Activated naive CD4-positive, alpha-beta T cell treated with anti-CD3 and anti-CD28 coated beads for 36 hours (primary cell): ENCODE measurements at regions of chr1 and their contacts with region 1.

Region 1: DNA sequence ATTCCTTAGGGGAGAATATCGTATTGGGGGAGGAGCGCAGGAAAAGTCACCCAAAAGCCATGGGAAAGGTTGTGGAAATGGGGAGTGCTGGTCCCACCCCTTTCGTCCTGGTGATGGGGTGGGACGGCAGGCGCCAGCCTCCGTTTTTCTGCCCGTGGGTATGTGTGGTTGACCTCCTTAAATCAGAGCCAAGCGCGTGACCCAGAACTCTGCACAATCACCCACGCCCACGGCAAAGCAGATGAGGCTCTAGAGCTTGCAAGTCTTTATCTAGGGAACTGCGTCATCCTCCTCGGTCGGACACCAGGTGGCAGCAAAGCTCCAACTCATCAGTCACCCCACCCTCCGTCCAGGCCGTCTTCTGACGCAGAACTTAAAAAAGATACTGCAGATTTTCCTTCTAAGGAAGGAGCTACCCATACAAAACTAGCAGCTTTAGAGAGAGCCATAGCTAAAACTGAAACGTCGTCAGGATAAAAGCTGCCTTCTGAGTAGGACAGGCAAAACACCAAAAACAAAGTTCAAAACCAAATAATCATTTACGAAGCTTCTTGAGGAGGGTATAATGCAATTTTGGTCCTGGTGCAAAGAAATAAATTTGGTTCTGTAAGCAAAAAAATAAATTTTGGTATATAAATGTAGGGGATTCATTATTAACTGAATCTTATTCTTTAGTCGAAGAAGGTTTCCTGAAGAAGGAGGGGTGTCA is 62.0 kb downstream of the TBX19 start:
- DNase-seq: peak; percentile 92
- H3K4me3 Mint-ChIP-seq: no peak overlapping the region
- H3K27ac Mint-ChIP-seq: no peak overlapping the region
- H3K4me1 Mint-ChIP-seq: peaks cover 19% of the 10 kb centered on the region
- H3K27me3 Mint-ChIP-seq: no peaks in the 10 kb centered on the region

Region 2: DNA sequence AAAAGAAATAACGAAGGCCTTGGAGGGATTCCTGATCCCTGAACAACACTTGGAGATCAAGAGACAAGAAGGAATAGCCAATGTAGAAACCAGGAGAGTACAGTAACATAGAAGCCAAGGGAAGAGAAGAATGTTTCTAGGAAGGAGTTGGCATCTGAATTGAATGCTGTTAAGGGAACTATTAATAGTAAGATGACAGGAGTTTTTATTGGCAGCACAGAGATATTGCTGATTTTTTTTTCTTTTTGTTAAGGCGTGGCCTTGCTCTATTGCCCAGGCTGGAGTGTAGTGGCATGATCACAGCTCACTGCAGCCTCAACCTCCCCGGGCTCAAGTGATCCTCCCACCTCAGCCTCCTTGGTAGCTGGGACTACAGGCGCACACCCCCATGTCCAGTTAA is 126.6 kb before region 1 on chr1:
- CTCF ChIA-PET with region 1: no interaction called
- intact Hi-C with region 1: no loop called
- DNase-seq: no peak
- H3K4me3 Mint-ChIP-seq: no peak overlapping the region
- H3K27ac Mint-ChIP-seq: no peak overlapping the region
- H3K4me1 Mint-ChIP-seq: peaks cover 6% of the 10 kb centered on the region
- H3K27me3 Mint-ChIP-seq: no peaks in the 10 kb centered on the region

Region 3: DNA sequence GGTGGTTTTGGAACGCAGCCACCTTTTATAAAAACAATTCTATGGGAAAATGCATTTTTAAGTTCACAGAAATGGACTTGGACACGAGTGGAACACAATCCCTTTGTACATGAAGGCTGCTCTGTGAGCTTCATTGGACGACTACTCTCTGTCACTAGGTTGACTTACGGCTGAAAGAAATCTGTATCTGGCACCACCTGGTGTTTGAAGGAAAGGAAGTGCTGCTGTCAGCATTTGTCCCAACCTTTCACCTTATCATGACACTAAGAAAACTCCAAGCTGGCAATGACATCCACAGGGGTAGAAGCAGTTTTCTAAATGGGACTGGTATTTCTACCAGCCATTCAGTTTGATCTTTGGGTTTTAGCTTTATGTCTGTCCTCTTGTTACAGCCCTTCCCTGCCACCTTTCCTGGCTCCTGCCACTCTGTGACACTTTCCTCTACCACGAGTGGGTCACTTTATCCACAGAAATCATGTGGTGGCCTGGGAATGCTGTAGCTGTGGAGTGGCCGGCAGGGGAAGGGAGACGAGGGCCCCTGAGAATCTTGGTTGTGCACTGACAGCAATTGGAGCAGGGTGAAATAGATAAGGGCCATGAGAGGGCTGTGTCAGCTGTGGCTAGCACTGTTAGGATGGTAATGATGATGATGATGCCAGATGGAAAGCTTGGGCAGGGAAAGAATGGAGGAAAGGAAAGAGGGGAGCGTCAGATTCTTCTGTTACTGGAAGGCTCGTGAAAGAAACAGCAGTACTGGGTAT is 23.2 kb after region 1 on chr1:
- CTCF ChIA-PET with region 1: interaction called, 70 read pairs
- intact Hi-C with region 1: loop called (anchors 1 kb)
- DNase-seq: peak; percentile 22
- H3K4me3 Mint-ChIP-seq: no peak overlapping the region
- H3K27ac Mint-ChIP-seq: no peak overlapping the region
- H3K4me1 Mint-ChIP-seq: peaks cover 9% of the 10 kb centered on the region
- H3K27me3 Mint-ChIP-seq: peaks cover 3% of the 10 kb centered on the region

Region 4: GRCh38 chr1:168421399-168422004 is 78.8 kb after region 1 on chr1:
- CTCF ChIA-PET with region 1: interaction called, 10 read pairs
- intact Hi-C with region 1: loop called (anchors 5 kb)
- DNase-seq: peak; percentile 22
- H3K4me3 Mint-ChIP-seq: no peak overlapping the region
- H3K27ac Mint-ChIP-seq: peak overlapping the region; percentile 5
- H3K4me1 Mint-ChIP-seq: peaks cover 13% of the 10 kb centered on the region
- H3K27me3 Mint-ChIP-seq: no peaks in the 10 kb centered on the region

Region 5: GRCh38 chr1:168572633-168573032 is 229.9 kb after region 1 on chr1:
- CTCF ChIA-PET with region 1: interaction called, 6 read pairs
- intact Hi-C with region 1: loop called (anchors 1 kb)
- DNase-seq: no peak
- H3K4me3 Mint-ChIP-seq: no peak overlapping the region
- H3K27ac Mint-ChIP-seq: no peak overlapping the region
- H3K4me1 Mint-ChIP-seq: peaks cover 6% of the 10 kb centered on the region
- H3K27me3 Mint-ChIP-seq: no peaks in the 10 kb centered on the region

Region 6: DNA sequence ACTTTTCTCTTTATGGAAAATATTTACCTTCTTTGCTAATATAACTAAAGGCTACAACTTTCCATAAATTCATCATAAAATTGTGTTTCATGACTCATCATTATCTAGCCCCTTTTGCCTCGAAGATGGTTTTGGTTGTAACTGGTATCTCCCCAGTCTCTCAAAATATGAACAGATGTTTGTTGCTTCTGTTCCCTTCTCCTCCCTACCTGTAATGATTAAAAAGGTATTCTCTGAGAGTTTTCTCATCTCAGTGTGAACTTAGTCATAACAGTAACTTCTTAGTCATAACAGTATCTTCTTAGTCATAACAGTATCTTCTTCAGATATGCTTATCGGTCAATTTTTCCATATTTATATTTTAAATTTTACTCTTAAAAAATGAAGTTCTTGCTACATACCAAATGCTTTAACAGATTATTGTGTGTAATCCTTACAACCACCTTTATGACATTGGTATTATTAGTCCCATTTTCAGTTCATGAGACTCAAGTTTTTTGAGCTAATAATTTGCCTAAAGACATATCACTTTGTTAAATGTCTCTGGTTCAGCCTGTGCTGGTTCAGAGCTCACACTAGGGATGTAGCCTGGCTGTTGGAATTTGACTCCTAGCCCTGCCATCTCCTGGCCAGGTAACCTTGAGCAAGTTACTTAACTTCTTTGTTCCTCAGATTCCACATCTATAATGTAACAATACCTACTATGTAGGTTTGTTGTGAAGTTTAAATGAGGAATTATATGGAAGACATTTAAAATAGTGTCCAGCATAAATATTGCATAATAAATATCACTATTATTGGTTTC is 796.3 kb after region 1 on chr1:
- CTCF ChIA-PET with region 1: no interaction called
- intact Hi-C with region 1: loop called (anchors 5 kb)
- DNase-seq: no peak
- H3K4me3 Mint-ChIP-seq: no peak overlapping the region
- H3K27ac Mint-ChIP-seq: peak overlapping the region; percentile 50
- H3K4me1 Mint-ChIP-seq: peaks cover 6% of the 10 kb centered on the region
- H3K27me3 Mint-ChIP-seq: no peaks in the 10 kb centered on the region